PC-3 (cell line): ENCODE measurements at regions of chr10 and their contacts with region 1.

Region 1: GRCh38 chr10:84424731-84425167 is 96.4 kb downstream of the CCSER2 start:
- DNase-seq: peak; percentile 89
- ATAC-seq: peak; percentile 100
- H3K4me3 ChIP-seq: peak overlapping the region; percentile 54
- H3K27ac ChIP-seq: peak overlapping the region; percentile 80
- H3K4me1 ChIP-seq: peaks cover 28% of the 10 kb centered on the region
- H3K27me3 ChIP-seq: no peaks in the 10 kb centered on the region
- CTCF ChIP-seq: no peak

Region 2: GRCh38 chr10:84352251-84352842 is 72.4 kb before region 1 on chr10:
- CTCF ChIA-PET with region 1: no interaction called
- POLR2A ChIA-PET with region 1: interaction called, 24 read pairs
- intact Hi-C with region 1: no loop called
- DNase-seq: peak; percentile 67
- ATAC-seq: peak; percentile 58
- H3K4me3 ChIP-seq: no peak overlapping the region
- H3K27ac ChIP-seq: no peak overlapping the region
- H3K4me1 ChIP-seq: peaks cover 7% of the 10 kb centered on the region; the same call in 1 of the 2 replicates
- H3K27me3 ChIP-seq: no peaks in the 10 kb centered on the region
- CTCF ChIP-seq: peak; percentile 75

Region 3: GRCh38 chr10:84375011-84375410 is 49.7 kb before region 1 on chr10:
- CTCF ChIA-PET with region 1: no interaction called
- POLR2A ChIA-PET with region 1: no interaction called
- intact Hi-C with region 1: loop called (anchors 1 kb)
- DNase-seq: peak; percentile 75
- ATAC-seq: no peak
- H3K4me3 ChIP-seq: no peak overlapping the region
- H3K27ac ChIP-seq: no peak overlapping the region
- H3K4me1 ChIP-seq: peaks cover 10% of the 10 kb centered on the region
- H3K27me3 ChIP-seq: no peaks in the 10 kb centered on the region
- CTCF ChIP-seq: peak; percentile 74

Region 4: DNA sequence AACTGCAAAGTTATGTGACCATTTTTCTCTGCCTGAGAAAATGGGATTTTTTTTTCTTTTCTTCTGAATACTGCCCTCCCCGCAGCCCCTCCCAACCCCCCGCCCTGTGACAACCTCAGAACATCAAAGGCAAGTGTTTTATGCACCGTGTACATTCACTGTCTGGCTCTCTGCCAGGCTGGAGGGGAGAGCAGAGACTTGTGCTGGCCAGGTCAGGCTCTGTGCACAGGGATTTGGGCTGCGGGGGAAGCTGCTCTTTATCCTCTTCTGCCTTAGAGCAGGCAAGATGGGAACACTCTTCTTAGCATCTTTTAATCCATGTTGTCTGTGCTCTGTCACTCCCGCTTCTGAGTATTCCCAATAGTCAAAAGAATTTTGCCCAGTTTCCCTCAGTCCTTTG is 98.8 kb after region 1 on chr10:
- CTCF ChIA-PET with region 1: no interaction called
- POLR2A ChIA-PET with region 1: no interaction called
- intact Hi-C with region 1: loop called (anchors 5 kb)
- DNase-seq: peak; percentile 25
- ATAC-seq: no peak
- H3K4me3 ChIP-seq: no peak overlapping the region
- H3K27ac ChIP-seq: no peak overlapping the region
- H3K4me1 ChIP-seq: peaks cover 30% of the 10 kb centered on the region
- H3K27me3 ChIP-seq: no peaks in the 10 kb centered on the region
- CTCF ChIP-seq: no peak

Region 5: GRCh38 chr10:84654671-84655070 is 229.9 kb after region 1 on chr10:
- CTCF ChIA-PET with region 1: no interaction called
- POLR2A ChIA-PET with region 1: no interaction called
- intact Hi-C with region 1: no loop called
- DNase-seq: peak; percentile 17
- ATAC-seq: no peak
- H3K4me3 ChIP-seq: no peak overlapping the region
- H3K27ac ChIP-seq: no peak overlapping the region
- H3K4me1 ChIP-seq: peaks cover 4% of the 10 kb centered on the region; the same call in 1 of the 2 replicates
- H3K27me3 ChIP-seq: 0 out of 2 replicates have a peak, but pooled peaks cover 2% of the 10 kb centered on the region
- CTCF ChIP-seq: no peak